ENCODE measurements at regions of chr5 and their contacts with region 1.

Region 1: GRCh38 chr5:77437194-77437593 is 54.9 kb downstream of the WDR41 start:
- DNase-seq: no peak
- H3K4me3 ChIP-seq: no peak overlapping the region
- H3K27ac ChIP-seq: no peak overlapping the region
- H3K4me1 ChIP-seq: no peaks in the 10 kb centered on the region
- H3K27me3 ChIP-seq: no peaks in the 10 kb centered on the region
- CTCF ChIP-seq: peak in 2 of 3 experiments; percentile 50 to 57; a peak in 3 of 4 replicates
- EP300 ChIP-seq: no peak
- POLR2A ChIP-seq: no peak
- RAD21 ChIP-seq: peak; percentile 74 to 78

Region 2: DNA sequence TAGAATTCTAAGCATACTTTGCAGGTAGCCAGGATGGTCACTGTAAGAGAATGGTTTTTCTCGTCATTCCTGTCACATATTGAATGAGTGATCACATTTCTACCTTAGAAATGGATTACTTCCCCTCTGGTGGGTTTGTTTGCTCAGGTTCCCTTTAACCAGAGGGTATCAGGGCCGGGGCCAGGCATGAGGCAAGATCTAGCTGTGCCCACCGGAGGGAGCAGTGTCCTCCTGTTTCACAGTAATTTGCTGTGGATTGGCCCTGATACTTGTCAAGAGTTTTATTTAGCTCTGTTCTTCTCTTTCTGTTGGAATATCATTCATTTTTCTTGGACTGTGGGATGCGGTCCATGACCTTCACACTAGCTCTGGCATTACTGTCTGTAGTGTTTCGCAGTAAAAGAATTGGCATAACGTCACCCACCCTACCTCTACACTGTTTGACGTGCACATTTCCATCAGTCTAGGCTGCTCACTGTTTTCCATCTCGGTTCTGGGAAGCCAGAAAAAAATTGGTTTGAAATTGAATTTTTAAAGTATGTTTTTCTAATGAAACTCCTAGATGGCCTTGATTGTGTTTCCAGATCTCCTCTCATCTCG is 307.7 kb before region 1 on chr5:
- CTCF ChIA-PET with region 1: interaction called, 20 read pairs
- POLR2A ChIA-PET with region 1: no interaction called
- DNase-seq: peak in 1 of 2 experiments; percentile 74
- H3K4me3 ChIP-seq: no peak overlapping the region
- H3K27ac ChIP-seq: no peak overlapping the region
- H3K4me1 ChIP-seq: no peaks in the 10 kb centered on the region
- H3K27me3 ChIP-seq: no peaks in the 10 kb centered on the region
- CTCF ChIP-seq: peak; percentile 63 to 77 (median 75)
- EP300 ChIP-seq: no peak
- POLR2A ChIP-seq: no peak
- RAD21 ChIP-seq: peak; percentile 71 to 76

Region 3: DNA sequence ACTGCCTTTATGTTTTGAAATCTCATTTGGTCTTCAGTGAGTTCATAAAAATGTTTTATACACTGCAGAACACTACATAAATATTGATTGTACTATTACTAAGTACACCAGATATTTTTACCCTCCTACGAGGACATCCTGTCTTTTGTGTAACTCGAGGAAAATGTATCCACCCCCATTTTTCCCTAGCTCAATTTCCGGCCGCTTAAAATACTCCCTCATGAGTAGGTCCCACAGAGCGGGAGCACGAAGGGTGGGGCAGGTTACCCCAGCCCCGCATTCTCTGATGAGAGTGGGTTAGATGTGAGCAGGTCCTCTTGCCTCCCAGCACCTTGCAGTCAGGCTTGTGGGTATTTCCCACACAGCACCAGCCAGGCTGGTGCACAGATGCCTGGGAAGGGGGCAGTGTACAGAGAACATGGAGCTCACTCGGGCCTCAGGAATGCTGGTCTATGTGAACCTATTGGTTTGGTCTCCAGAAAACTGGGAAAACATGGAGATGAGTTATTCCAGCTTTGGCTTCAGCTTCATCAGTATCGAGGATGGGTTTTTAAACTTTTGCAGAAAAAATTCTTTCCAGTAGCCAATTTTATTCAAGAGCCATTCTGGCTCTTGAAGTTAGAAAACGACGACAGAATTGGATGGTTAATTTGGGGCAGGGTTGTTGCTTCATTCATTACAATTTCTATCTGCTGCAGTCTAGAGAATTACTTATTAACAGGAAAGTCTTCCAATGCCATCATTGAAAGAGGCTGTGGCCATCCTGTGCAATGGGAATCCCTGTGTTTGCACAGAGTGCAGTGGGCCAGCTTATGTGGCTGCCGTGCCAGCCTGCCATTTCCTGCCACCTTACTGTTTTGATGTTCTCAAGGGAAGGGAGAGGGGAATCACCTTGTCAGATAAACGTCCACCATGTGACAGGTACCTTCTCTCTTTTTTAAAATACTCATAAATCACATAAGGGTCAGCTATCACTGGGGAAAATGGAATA is 18.3 kb before region 1 on chr5:
- CTCF ChIA-PET with region 1: interaction called, 17 read pairs
- POLR2A ChIA-PET with region 1: no interaction called
- DNase-seq: no peak
- H3K4me3 ChIP-seq: no peak overlapping the region
- H3K27ac ChIP-seq: no peak overlapping the region
- H3K4me1 ChIP-seq: no peaks in the 10 kb centered on the region; a peak in 1 of 7 replicates
- H3K27me3 ChIP-seq: 0 out of 7 replicates have a peak, but pooled peaks cover 0 to 2% (median 0%) of the 10 kb centered on the region in 4 experiments
- CTCF ChIP-seq: no peak
- EP300 ChIP-seq: no peak
- POLR2A ChIP-seq: no peak
- RAD21 ChIP-seq: no peak

Region 4: GRCh38 chr5:77426670-77427069 is 10.5 kb before region 1 on chr5:
- CTCF ChIA-PET with region 1: interaction called, 14 read pairs
- POLR2A ChIA-PET with region 1: no interaction called
- DNase-seq: no peak
- H3K4me3 ChIP-seq: no peak overlapping the region
- H3K27ac ChIP-seq: no peak overlapping the region
- H3K4me1 ChIP-seq: no peaks in the 10 kb centered on the region
- H3K27me3 ChIP-seq: no peaks in the 10 kb centered on the region
- CTCF ChIP-seq: no peak
- EP300 ChIP-seq: no peak
- POLR2A ChIP-seq: no peak
- RAD21 ChIP-seq: no peak

Measured in H1 (cell line).